CD4-positive, alpha-beta memory T cell (primary cell): ENCODE measurements at regions of chr11 and their contacts with region 1.

Region 1: DNA sequence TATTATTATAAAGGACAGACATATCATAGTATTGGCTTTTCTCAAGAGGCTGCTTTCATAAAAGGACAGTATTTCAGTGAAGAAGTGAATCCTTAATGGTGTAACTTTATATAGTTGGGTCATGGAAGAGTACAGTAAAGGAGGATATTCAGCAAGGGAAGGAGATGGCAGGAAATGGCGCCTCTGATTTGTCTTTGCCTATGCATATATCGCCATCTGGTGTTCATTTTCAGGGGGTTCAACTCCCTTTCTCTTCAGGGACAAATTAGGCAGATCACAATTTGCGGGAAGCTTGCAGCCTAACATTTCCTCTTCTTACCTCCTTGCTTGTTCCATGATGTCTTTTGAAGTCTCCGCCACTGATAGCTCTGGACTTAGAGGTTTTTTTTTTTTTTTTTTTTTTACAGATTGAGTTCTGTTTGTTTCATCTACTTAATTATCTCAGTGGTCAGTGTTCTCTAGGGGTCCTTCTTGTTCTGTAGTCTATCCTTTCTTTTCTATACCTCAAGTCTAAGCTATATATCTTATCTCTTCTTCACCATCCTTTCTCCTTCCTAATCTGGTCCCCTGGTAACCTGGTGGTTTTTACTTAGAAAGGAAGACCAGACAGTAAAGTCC is 21.8 kb upstream of the RRM1 start:
- DNase-seq: peak; percentile 64 to 77 (median 76)
- H3K4me3 ChIP-seq: no peak overlapping the region
- H3K4me3 Mint-ChIP-seq: no peak overlapping the region
- H3K27ac ChIP-seq: peak overlapping the region; percentile 17
- H3K27ac Mint-ChIP-seq: peak overlapping the region; percentile 33 to 92 (median 88)
- H3K4me1 ChIP-seq: peaks cover 39% of the 10 kb centered on the region
- H3K4me1 Mint-ChIP-seq: peaks cover 40 to 63% (median 49%) of the 10 kb centered on the region in 4 donors
- H3K27me3 ChIP-seq: no peaks in the 10 kb centered on the region
- H3K27me3 Mint-ChIP-seq: no peaks in the 10 kb centered on the region

Region 2: GRCh38 chr11:3609416-3610265 is 463.1 kb before region 1 on chr11:
- CTCF ChIA-PET with region 1: no interaction called
- POLR2A ChIA-PET with region 1: no interaction called
- intact Hi-C with region 1: loop called (anchors 1 kb)
- DNase-seq: peak in 4 of 5 donors; percentile 35 to 49 (median 41)
- H3K4me3 ChIP-seq: no peak overlapping the region
- H3K4me3 Mint-ChIP-seq: no peak overlapping the region
- H3K27ac ChIP-seq: no peak overlapping the region
- H3K27ac Mint-ChIP-seq: no peak overlapping the region
- H3K4me1 ChIP-seq: peaks cover 8% of the 10 kb centered on the region
- H3K4me1 Mint-ChIP-seq: peaks cover 7 to 13% (median 9%) of the 10 kb centered on the region in 4 donors
- H3K27me3 ChIP-seq: no peaks in the 10 kb centered on the region
- H3K27me3 Mint-ChIP-seq: no peaks in the 10 kb centered on the region

Region 3: DNA sequence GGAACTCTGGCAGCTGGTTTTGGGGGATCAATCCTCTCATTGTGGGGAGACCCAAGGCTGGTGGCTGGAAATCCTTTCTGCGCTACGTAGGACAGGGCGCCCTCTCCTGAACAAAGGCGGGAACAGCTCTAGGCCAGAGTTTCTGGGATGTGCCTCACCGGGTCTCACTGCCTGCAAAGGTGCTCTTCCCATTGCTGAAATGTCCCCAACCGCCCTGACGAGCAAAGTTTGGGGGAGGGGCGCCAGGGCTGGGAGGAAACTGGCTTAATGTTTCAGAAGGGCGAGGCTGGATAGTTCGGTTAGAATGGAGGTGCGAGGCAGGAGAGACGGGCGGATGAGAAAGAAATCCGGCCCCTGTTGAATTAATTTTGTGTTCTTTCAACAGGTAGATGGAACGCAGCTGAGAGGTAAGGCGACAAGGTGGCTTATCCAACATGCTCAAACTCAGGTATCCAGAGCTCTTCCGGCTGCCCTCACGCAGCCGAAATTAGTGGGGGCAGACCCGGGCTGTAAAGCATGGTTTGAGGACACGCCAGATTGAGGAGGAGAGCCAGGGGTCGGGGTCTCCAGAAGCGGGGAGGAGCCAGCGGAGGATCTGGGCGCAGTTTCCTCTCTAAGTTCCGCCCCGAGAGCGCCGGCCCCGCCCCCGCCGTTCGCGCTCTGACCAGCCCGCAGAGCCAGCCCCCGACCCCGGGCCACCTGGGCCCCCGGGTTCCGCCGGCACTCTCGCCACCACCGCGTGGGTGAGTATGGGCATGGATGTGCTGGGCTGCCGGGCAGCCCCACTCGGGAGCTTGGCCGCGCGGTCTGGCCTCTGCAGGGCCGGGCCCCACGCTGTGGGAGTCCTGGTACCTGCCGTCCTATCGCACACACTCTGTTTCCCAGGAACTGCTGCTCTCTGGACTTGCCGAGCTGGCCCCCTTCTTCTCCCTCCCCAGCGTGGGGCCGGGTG is 264.6 kb before region 1 on chr11 and contains the start of gene PGAP2:
- CTCF ChIA-PET with region 1: interaction called, 39 read pairs
- POLR2A ChIA-PET with region 1: interaction called, 6 read pairs
- intact Hi-C with region 1: no loop called
- DNase-seq: peak; percentile 42 to 62 (median 48)
- H3K4me3 ChIP-seq: peak within 1 kb of the TSS; percentile 81 to 85
- H3K4me3 Mint-ChIP-seq: peak within 1 kb of the TSS; percentile 92 to 99 (median 97)
- H3K27ac ChIP-seq: peak within 1 kb of the TSS; percentile 68
- H3K27ac Mint-ChIP-seq: peak within 1 kb of the TSS; percentile 82 to 99 (median 95)
- H3K4me1 ChIP-seq: peaks cover 10% of the 10 kb centered on the region
- H3K4me1 Mint-ChIP-seq: peaks cover 6 to 18% (median 14%) of the 10 kb centered on the region in 4 donors
- H3K27me3 ChIP-seq: no peaks in the 10 kb centered on the region
- H3K27me3 Mint-ChIP-seq: no peaks in the 10 kb centered on the region
- total RNA-seq, gene PGAP2: 18.4 to 20.7 TPM

Region 4: GRCh38 chr11:3841426-3842350 is 231.1 kb before region 1 on chr11:
- CTCF ChIA-PET with region 1: interaction called, 934 read pairs
- POLR2A ChIA-PET with region 1: interaction called, 42 read pairs
- intact Hi-C with region 1: no loop called
- DNase-seq: peak; percentile 94 to 99 (median 96)
- H3K4me3 ChIP-seq: peak overlapping the region in 1 of 2 donors; percentile 75
- H3K4me3 Mint-ChIP-seq: peak overlapping the region; percentile 86 to 96 (median 88)
- H3K27ac ChIP-seq: peak overlapping the region; percentile 95
- H3K27ac Mint-ChIP-seq: peak overlapping the region; percentile 95 to 99 (median 98)
- H3K4me1 ChIP-seq: peaks cover 34% of the 10 kb centered on the region
- H3K4me1 Mint-ChIP-seq: peaks cover 23 to 57% (median 37%) of the 10 kb centered on the region in 4 donors
- H3K27me3 ChIP-seq: no peaks in the 10 kb centered on the region
- H3K27me3 Mint-ChIP-seq: peaks cover 0 to 3% of the 10 kb centered on the region in 2 donors

Region 5: GRCh38 chr11:3905080-3905953 is 167.5 kb before region 1 on chr11:
- CTCF ChIA-PET with region 1: interaction called, 11 read pairs
- POLR2A ChIA-PET with region 1: no interaction called
- intact Hi-C with region 1: no loop called
- DNase-seq: peak; percentile 62 to 89 (median 77)
- H3K4me3 ChIP-seq: no peak overlapping the region
- H3K4me3 Mint-ChIP-seq: peak overlapping the region in 7 of 8 donors; percentile 8 to 67 (median 40)
- H3K27ac ChIP-seq: peak overlapping the region; percentile 45
- H3K27ac Mint-ChIP-seq: peak overlapping the region; percentile 75 to 95 (median 93)
- H3K4me1 ChIP-seq: peaks cover 84% of the 10 kb centered on the region
- H3K4me1 Mint-ChIP-seq: peaks cover 66 to 90% (median 81%) of the 10 kb centered on the region in 4 donors
- H3K27me3 ChIP-seq: no peaks in the 10 kb centered on the region
- H3K27me3 Mint-ChIP-seq: no peaks in the 10 kb centered on the region

Region 6: GRCh38 chr11:3947061-3947460 is 125.7 kb before region 1 on chr11:
- CTCF ChIA-PET with region 1: interaction called, 179 read pairs
- POLR2A ChIA-PET with region 1: interaction called, 24 read pairs
- intact Hi-C with region 1: loop called (anchors 1 kb)
- DNase-seq: peak; percentile 72 to 81 (median 77)
- H3K4me3 ChIP-seq: peak overlapping the region; percentile 19 to 45
- H3K4me3 Mint-ChIP-seq: peak overlapping the region; percentile 72 to 86 (median 80)
- H3K27ac ChIP-seq: peak overlapping the region; percentile 68
- H3K27ac Mint-ChIP-seq: peak overlapping the region; percentile 89 to 98 (median 94)
- H3K4me1 ChIP-seq: peaks cover 99% of the 10 kb centered on the region
- H3K4me1 Mint-ChIP-seq: peaks cover 87 to 97% (median 92%) of the 10 kb centered on the region in 4 donors
- H3K27me3 ChIP-seq: no peaks in the 10 kb centered on the region
- H3K27me3 Mint-ChIP-seq: no peaks in the 10 kb centered on the region

Region 7: DNA sequence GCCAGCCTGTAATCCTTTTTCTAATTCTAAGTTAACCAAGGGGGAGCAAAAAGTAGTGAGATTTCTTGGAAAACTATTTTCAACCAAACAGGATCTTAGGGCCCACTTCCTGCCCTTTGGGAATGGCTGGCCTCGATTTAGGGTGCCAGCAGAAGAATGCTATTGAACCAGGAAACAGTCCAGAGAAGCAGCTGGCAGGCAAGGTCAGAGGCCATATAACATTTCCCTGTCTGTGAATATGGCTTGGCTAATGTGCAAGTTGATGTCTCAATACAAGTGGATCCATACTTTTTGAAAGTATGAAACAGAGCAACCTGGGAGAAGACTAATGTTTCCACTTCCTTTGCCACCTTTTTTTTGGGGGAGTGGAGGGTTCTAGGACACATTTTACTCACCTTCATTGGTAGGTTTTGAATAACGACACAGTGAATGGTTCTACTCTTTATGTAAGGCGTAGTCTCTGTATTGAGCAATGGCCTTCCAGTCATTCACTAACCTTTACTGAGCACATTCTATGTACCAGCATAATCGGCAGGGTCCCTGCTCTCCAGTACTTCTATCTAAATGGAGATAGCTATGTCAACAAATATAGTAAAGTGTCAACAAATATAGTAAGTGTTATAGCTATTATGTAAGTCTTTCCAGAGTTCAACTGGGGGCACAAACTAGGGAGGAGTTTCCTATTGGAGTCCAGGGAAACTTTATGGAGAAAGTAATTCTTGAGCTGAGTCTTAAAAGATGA is 12.4 kb before region 1 on chr11:
- CTCF ChIA-PET with region 1: interaction called, 30 read pairs
- POLR2A ChIA-PET with region 1: interaction called, 6 read pairs
- intact Hi-C with region 1: no loop called
- DNase-seq: no peak
- H3K4me3 ChIP-seq: no peak overlapping the region
- H3K4me3 Mint-ChIP-seq: no peak overlapping the region
- H3K27ac ChIP-seq: no peak overlapping the region
- H3K27ac Mint-ChIP-seq: peak overlapping the region in 5 of 7 donors; percentile 17 to 84 (median 47)
- H3K4me1 ChIP-seq: peaks cover 34% of the 10 kb centered on the region
- H3K4me1 Mint-ChIP-seq: peaks cover 35 to 49% (median 38%) of the 10 kb centered on the region in 4 donors
- H3K27me3 ChIP-seq: no peaks in the 10 kb centered on the region
- H3K27me3 Mint-ChIP-seq: no peaks in the 10 kb centered on the region

Region 8: GRCh38 chr11:4118107-4118506 is 45.3 kb after region 1 on chr11:
- CTCF ChIA-PET with region 1: no interaction called
- POLR2A ChIA-PET with region 1: no interaction called
- intact Hi-C with region 1: no loop called
- DNase-seq: no peak
- H3K4me3 ChIP-seq: no peak overlapping the region
- H3K4me3 Mint-ChIP-seq: no peak overlapping the region
- H3K27ac ChIP-seq: no peak overlapping the region
- H3K27ac Mint-ChIP-seq: peak overlapping the region in 5 of 7 donors; percentile 1 to 58 (median 49)
- H3K4me1 ChIP-seq: no peaks in the 10 kb centered on the region
- H3K4me1 Mint-ChIP-seq: peaks cover 0 to 5% (median 1%) of the 10 kb centered on the region in 4 donors
- H3K27me3 ChIP-seq: no peaks in the 10 kb centered on the region
- H3K27me3 Mint-ChIP-seq: no peaks in the 10 kb centered on the region

Region 9: DNA sequence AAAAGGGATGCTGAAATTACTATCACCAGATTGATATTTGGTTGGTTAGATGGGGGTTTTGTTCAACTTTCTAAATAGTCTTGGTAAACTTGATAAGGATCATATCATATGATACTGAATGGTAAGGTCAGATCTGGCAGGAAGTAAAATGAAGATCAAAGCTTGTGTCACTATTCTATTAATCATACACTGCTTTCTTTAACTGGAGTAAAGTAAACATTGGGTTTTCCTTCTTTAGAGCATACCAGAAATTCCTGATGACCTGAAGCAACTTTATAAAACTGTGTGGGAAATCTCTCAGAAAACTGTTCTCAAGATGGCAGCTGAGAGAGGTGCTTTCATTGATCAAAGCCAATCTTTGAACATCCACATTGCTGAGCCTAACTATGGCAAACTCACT is 62.1 kb after region 1 on chr11:
- CTCF ChIA-PET with region 1: no interaction called
- POLR2A ChIA-PET with region 1: no interaction called
- intact Hi-C with region 1: no loop called
- DNase-seq: no peak
- H3K4me3 ChIP-seq: no peak overlapping the region
- H3K4me3 Mint-ChIP-seq: no peak overlapping the region
- H3K27ac ChIP-seq: no peak overlapping the region
- H3K27ac Mint-ChIP-seq: peak overlapping the region in 2 of 7 donors; percentile 5 to 48
- H3K4me1 ChIP-seq: no peaks in the 10 kb centered on the region
- H3K4me1 Mint-ChIP-seq: peaks cover 0 to 5% (median 2%) of the 10 kb centered on the region in 4 donors
- H3K27me3 ChIP-seq: no peaks in the 10 kb centered on the region
- H3K27me3 Mint-ChIP-seq: no peaks in the 10 kb centered on the region

Region 10: DNA sequence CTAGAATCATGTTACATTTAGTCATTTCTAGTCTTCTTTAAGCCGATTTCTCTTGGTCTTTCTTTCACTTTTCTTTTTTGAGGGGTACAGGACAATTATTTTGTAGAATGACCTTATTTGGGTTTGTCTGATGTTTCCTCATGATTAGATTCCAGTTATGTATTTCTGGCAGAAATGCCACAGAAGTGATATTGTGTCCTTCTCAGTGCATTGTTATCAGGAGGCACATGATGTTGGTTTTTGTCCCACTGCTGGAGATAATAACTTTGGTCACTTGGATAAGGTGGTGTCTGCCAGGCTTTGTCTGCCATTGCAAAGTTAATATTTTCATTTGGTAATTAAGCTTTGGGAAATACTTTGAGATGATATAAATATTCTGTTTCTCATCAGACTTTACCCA is 122.1 kb after region 1 on chr11:
- CTCF ChIA-PET with region 1: no interaction called
- POLR2A ChIA-PET with region 1: no interaction called
- intact Hi-C with region 1: no loop called
- DNase-seq: no peak
- H3K4me3 ChIP-seq: no peak overlapping the region
- H3K4me3 Mint-ChIP-seq: no peak overlapping the region
- H3K27ac ChIP-seq: no peak overlapping the region
- H3K27ac Mint-ChIP-seq: no peak overlapping the region
- H3K4me1 ChIP-seq: no peaks in the 10 kb centered on the region
- H3K4me1 Mint-ChIP-seq: peaks cover 0 to 1% (median 0%) of the 10 kb centered on the region in 4 donors
- H3K27me3 ChIP-seq: no peaks in the 10 kb centered on the region
- H3K27me3 Mint-ChIP-seq: peaks cover 7% of the 10 kb centered on the region in 2 donors

Region 11: GRCh38 chr11:4418403-4418802 is 345.6 kb after region 1 on chr11:
- CTCF ChIA-PET with region 1: no interaction called
- POLR2A ChIA-PET with region 1: no interaction called
- intact Hi-C with region 1: no loop called
- DNase-seq: no peak
- H3K4me3 ChIP-seq: no peak overlapping the region
- H3K4me3 Mint-ChIP-seq: no peak overlapping the region
- H3K27ac ChIP-seq: no peak overlapping the region
- H3K27ac Mint-ChIP-seq: no peak overlapping the region
- H3K4me1 ChIP-seq: no peaks in the 10 kb centered on the region
- H3K4me1 Mint-ChIP-seq: no peaks in the 10 kb centered on the region
- H3K27me3 ChIP-seq: no peaks in the 10 kb centered on the region
- H3K27me3 Mint-ChIP-seq: peaks cover 0 to 14% of the 10 kb centered on the region in 2 donors